MCF 10A (cell line): ENCODE measurements at regions of chr5 and their contacts with region 1.

Region 1: GRCh38 chr5:82641331-82642003 is 363.3 kb upstream of the RPS23 start:
- DNase-seq: peak; percentile 94
- H3K4me3 Mint-ChIP-seq: no peak overlapping the region
- H3K27ac Mint-ChIP-seq: no peak overlapping the region
- H3K4me1 Mint-ChIP-seq: peaks cover 7% of the 10 kb centered on the region
- H3K27me3 Mint-ChIP-seq: no peaks in the 10 kb centered on the region
- CTCF ChIP-seq: peak; percentile 66

Region 2: DNA sequence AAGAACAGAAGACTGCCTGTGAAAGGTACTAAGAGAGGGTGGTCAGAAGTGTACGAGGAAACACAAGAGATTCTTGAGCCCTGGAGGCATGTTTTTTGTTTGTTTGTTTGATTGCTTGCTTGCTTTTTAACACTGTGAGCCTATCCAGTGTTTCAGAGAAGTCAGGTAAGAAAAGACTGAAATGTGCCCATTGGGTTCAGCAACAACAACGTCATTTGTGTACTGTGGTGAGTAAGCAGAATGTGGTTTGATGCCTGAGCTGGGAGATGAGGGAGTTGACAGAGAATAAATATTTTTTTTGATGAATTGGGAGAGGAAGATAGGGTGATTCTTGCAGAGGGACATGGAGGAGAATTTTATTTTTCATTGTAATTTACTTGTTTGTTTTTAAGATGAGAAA is 436.5 kb before region 1 on chr5:
- CTCF ChIA-PET with region 1: no interaction called
- POLR2A ChIA-PET with region 1: no interaction called
- intact Hi-C with region 1: no loop called
- DNase-seq: no peak
- H3K4me3 Mint-ChIP-seq: no peak overlapping the region
- H3K27ac Mint-ChIP-seq: no peak overlapping the region
- H3K4me1 Mint-ChIP-seq: no peaks in the 10 kb centered on the region
- H3K27me3 Mint-ChIP-seq: no peaks in the 10 kb centered on the region
- CTCF ChIP-seq: no peak

Region 3: DNA sequence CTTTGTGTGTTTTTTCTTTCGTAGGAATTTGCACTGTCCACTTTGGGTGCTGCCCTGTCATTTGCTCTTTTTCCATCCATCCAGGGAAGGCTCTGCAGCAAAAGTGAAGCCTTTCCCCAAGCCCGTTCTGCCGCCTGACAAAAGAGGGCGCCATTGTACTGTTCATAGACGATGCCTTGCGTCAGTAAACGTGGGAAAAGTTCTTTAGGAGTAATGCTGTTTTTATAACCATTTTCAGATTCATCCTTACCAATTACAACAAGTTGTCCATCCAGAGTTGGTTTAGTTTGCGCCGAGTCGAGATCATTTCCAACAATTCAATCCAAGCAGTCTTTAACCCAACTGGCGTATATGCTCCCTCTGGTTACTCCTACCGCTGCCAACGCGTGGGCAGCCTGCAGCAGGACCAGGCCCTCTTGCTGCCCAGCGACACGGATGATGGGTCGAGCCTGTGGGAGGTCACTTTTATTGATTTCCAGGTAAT is 329.1 kb before region 1 on chr5:
- CTCF ChIA-PET with region 1: no interaction called
- POLR2A ChIA-PET with region 1: no interaction called
- intact Hi-C with region 1: loop called (anchors 1 kb)
- DNase-seq: peak; percentile 70
- H3K4me3 Mint-ChIP-seq: no peak overlapping the region
- H3K27ac Mint-ChIP-seq: no peak overlapping the region
- H3K4me1 Mint-ChIP-seq: no peaks in the 10 kb centered on the region
- H3K27me3 Mint-ChIP-seq: no peaks in the 10 kb centered on the region
- CTCF ChIP-seq: peak; percentile 75

Region 4: DNA sequence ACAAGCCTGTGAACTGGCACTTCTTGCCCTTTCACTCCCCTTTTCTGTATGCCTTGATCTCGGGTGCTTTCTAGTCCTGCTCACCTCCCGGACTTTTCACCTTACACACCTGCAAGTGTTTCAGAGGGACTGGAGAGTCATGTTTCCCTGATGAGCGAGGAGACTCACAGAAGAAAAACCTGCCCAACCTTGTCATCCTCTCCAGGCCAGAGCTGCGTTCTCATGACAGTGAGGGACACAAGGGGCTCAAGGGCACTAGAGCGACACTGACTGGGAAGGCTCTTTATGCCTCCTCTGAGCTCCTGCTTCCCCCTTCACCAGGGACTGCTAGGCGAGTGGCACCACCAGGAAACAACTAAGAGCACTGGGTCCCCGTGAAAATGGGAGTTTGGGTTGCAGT is 13.6 kb after region 1 on chr5:
- CTCF ChIA-PET with region 1: interaction called, 22 read pairs
- POLR2A ChIA-PET with region 1: no interaction called
- intact Hi-C with region 1: no loop called
- DNase-seq: no peak
- H3K4me3 Mint-ChIP-seq: no peak overlapping the region
- H3K27ac Mint-ChIP-seq: no peak overlapping the region
- H3K4me1 Mint-ChIP-seq: no peaks in the 10 kb centered on the region
- H3K27me3 Mint-ChIP-seq: no peaks in the 10 kb centered on the region
- CTCF ChIP-seq: no peak

Region 5: GRCh38 chr5:83564069-83564749 is 922.7 kb after region 1 on chr5:
- CTCF ChIA-PET with region 1: interaction called, 16 read pairs
- POLR2A ChIA-PET with region 1: no interaction called
- intact Hi-C with region 1: loop called (anchors 1 kb)
- DNase-seq: peak; percentile 58
- H3K4me3 Mint-ChIP-seq: no peak overlapping the region
- H3K27ac Mint-ChIP-seq: no peak overlapping the region
- H3K4me1 Mint-ChIP-seq: peaks cover 27% of the 10 kb centered on the region
- H3K27me3 Mint-ChIP-seq: no peaks in the 10 kb centered on the region
- CTCF ChIP-seq: peak; percentile 51

Region 6: DNA sequence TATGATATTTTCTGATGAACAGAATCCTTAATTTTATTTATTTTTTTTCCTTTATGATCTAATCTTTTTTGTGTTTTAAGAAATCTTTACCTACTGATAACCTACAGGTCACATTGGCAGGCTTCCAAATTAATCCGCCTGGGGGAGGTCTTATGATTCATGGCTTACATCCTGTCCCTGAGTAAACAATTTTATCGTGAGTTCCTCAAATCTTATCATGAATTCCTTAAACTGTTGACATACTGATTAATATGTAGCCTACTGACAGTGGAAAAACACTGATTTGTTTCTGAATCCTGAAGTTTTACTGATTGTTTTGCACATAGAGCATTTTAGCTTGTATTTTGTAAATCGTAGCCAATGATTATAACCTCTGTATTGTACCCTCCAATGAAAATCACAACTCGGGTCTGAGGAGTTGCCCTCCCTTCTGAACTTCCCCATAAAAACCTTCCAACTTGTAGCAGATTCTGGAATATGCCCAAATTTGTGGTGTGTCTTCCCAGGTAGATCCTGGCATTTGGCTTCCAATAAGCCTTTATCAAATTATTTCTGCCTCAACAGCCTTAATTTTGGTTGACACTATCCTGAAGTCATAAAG is 935.7 kb after region 1 on chr5:
- CTCF ChIA-PET with region 1: no interaction called
- POLR2A ChIA-PET with region 1: no interaction called
- intact Hi-C with region 1: no loop called
- DNase-seq: peak; percentile 30
- H3K4me3 Mint-ChIP-seq: no peak overlapping the region
- H3K27ac Mint-ChIP-seq: peak overlapping the region; percentile 78
- H3K4me1 Mint-ChIP-seq: peaks cover 18% of the 10 kb centered on the region
- H3K27me3 Mint-ChIP-seq: no peaks in the 10 kb centered on the region
- CTCF ChIP-seq: no peak